ENCODE measurements at regions of chr1 and their contacts with region 1.

Region 1: DNA sequence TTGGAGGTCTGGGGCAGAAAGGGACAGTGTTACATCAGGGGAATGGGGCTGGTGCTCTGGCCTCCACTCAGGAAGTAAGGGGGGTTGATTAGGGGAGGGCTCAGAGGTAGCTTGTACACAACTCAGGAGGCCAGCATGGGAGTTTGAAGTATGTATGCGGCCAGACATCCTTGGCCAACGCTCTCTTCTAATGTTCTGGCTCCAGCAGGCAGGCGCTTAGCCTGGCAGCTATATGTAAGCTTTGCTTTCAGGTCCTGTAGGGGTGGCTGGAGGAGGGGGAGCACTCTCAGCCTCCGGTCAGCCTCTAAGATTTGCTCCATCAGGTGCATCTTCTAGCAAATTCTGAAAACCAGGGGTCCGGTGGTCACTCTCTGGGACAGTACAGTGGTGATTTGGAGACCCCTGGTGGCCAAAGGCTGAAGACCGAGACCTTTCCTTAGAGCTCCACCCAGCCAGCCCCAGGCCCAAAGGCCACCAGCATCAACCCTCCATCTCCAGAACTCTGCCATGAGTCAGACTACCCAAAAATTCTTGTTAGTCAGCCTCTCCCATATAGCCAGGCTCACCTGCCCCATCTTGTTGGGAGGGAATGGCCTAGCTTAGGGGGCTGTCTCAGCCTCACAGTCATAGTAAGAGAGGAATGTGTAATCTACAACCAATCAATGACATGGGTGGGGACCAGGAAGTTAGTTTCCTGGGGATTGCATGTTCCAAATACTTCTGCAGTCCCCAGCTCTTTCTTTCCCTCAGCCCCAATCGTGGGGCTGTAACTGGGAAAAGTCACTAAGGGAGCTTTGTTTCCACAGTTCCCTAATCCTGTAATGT is 9.7 kb upstream of the COL8A2 start:
- DNase-seq: peak; percentile 58 to 81
- H3K4me3 ChIP-seq: no peak overlapping the region
- H3K27ac ChIP-seq: peak overlapping the region; percentile 76 to 77
- H3K4me1 ChIP-seq: peaks cover 7 to 54% (median 41%) of the 10 kb centered on the region in 4 donors
- H3K27me3 ChIP-seq: no peaks in the 10 kb centered on the region
- CTCF ChIP-seq: peak; percentile 76 to 90

Region 2: GRCh38 chr1:36099681-36100341 is 34.9 kb before region 1 on chr1:
- intact Hi-C with region 1: loop called (anchors 1 kb)
- DNase-seq: peak; percentile 73 to 84
- H3K4me3 ChIP-seq: no peak overlapping the region
- H3K27ac ChIP-seq: peak overlapping the region; percentile 50 to 65
- H3K4me1 ChIP-seq: peaks cover 0 to 23% (median 13%) of the 10 kb centered on the region in 4 donors
- H3K27me3 ChIP-seq: no peaks in the 10 kb centered on the region
- CTCF ChIP-seq: peak; percentile 71 to 93